GM10248 (cell line): ENCODE measurements at regions of chr2 and their contacts with region 1.

Region 1: DNA sequence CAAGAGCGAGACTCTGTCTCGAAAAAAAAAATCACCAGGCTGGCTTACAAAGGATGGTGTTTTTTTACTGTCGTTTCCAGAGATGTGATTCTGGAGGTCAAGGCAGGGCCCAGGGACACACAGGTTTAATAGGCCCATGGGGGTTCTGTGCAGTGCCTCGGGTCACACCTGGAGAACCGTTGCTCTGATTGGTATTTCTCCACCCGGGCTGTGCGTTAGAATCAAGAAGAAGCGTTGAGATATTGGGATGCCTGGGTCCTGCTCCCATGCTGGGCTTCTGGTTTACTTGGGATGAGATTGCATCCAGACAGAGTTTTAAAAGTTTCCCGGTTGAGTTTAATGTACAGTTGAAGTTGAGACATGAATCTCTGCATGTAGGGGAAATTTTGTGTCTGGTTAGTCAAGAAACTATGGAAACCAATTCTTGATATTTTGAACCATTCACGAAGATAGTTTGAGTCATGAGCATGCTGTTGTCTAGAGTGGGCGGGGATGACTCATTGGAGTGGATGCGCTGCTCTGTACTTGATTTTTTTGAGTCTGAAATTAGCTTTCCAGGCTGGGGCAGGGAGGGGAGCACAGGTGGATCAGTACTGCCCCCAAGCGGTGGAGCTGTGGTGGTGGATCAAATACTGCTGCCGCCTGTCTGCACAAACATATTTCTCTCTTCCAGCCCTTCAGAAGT is 50.1 kb downstream of the GREB1 start:
- DNase-seq: peak; percentile 87
- CTCF ChIP-seq: peak; percentile 80

Region 2: GRCh38 chr2:11129598-11130449 is 454.2 kb before region 1 on chr2:
- CTCF ChIA-PET with region 1: interaction called, 207 read pairs
- POLR2A ChIA-PET with region 1: no interaction called
- DNase-seq: peak; percentile 76
- CTCF ChIP-seq: peak; percentile 45

Region 3: GRCh38 chr2:11292464-11293255 is 291.3 kb before region 1 on chr2:
- CTCF ChIA-PET with region 1: no interaction called
- POLR2A ChIA-PET with region 1: no interaction called
- DNase-seq: no peak
- CTCF ChIP-seq: no peak

Region 4: DNA sequence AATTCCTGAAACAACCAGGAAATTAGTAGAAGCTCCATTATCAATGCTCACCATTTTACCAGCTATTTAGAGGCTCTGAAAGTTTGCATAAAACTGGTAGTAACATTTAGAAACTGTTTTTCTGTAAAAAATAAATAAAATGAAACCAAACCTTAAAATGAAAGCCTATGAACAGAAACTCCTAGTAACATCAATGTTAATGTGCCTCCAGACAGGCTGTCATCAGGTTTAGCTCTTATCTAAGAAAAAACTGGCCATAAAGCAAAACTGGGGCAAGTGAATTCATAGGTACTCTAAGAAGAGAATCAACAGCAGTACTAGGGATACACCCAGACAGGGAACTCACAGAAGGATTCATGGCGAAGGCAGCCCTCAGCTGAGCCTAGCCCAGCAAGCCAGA is 126.0 kb before region 1 on chr2:
- CTCF ChIA-PET with region 1: interaction called, 50 read pairs
- POLR2A ChIA-PET with region 1: no interaction called
- DNase-seq: no peak
- CTCF ChIP-seq: no peak

Region 5: GRCh38 chr2:11491348-11491933 is 92.5 kb before region 1 on chr2:
- CTCF ChIA-PET with region 1: interaction called, 34 read pairs
- POLR2A ChIA-PET with region 1: no interaction called
- DNase-seq: no peak
- CTCF ChIP-seq: no peak

Region 6: GRCh38 chr2:11539317-11540152 is 44.4 kb before region 1 on chr2:
- CTCF ChIA-PET with region 1: interaction called, 11 read pairs
- POLR2A ChIA-PET with region 1: no interaction called
- DNase-seq: no peak
- CTCF ChIP-seq: no peak

Region 7: DNA sequence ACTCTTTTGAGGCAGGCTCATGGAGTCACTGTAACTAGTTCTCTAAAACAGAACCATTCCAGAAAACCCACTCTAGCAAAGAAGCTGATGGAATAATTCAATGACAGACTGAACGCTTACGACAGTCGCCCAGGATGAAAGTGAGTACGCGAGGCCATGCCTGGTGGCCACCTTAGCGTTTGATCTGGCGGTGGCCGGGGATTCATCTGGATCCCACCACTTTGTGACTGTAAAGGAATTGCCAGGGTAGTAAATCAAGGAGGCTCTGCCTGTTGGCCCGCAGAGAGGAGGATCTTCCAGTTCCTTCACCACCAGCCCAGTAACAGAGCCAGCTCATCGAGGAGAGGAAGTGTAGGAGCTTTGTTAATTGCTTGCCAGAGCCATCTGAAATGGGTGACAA is 15.5 kb before region 1 on chr2:
- CTCF ChIA-PET with region 1: interaction called, 59 read pairs
- POLR2A ChIA-PET with region 1: no interaction called
- DNase-seq: no peak
- CTCF ChIP-seq: no peak

Region 8: GRCh38 chr2:12169721-12170120 is 585.7 kb after region 1 on chr2:
- CTCF ChIA-PET with region 1: no interaction called
- POLR2A ChIA-PET with region 1: no interaction called
- DNase-seq: no peak
- CTCF ChIP-seq: no peak